ENCODE measurements at regions of chr1 and their contacts with region 1.

Region 1: DNA sequence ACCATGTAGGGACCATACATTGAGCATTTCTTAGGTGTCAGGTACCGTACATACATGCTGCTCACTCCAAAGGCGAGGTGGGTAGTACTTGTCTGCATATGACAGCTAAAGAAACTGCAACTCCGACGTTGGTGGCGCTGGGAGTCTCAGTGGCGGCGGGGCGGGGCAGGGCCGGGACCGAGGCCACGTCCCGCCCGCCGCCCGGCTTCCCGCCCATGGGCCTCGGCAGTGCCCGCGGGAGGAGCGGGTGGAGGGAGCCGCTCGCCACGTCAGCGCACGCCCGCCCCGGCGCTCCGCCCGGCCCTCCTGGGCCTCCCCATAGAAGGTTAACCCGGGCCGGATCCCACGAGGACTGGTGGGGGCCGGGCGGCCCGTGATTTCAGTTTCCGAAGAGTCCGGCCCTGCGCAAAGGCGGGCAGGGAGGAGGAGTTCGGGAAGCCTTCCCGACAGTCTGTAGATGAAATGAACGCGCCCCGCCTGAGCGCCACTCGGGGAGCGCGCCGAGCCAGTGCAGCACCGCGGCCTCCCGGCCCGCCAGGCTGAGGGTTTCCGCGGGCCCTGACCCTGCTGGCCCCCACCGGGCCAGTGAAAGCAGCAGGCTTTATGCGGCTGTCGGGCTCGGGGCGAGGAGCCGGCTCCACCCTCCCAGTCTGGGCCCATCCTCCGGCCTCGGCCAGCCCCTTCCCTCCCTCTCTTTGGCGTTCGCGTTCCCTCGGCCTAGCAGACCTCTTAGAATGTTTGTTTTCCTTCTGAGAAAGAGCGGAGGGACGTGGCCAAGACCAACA is 119.9 kb upstream of the JUN start:
- DNase-seq: peak; percentile 56 to 76 (median 60)
- H3K4me3 ChIP-seq: peak overlapping the region; percentile 53
- H3K4me3 Mint-ChIP-seq: peak overlapping the region; percentile 74 to 91 (median 83)
- H3K27ac ChIP-seq: peak overlapping the region; percentile 27
- H3K27ac Mint-ChIP-seq: peak overlapping the region; percentile 50 to 96 (median 89)
- H3K4me1 ChIP-seq: peaks cover 11% of the 10 kb centered on the region
- H3K4me1 Mint-ChIP-seq: peaks cover 16 to 23% (median 19%) of the 10 kb centered on the region in 3 donors
- H3K27me3 ChIP-seq: no peaks in the 10 kb centered on the region
- H3K27me3 Mint-ChIP-seq: no peaks in the 10 kb centered on the region

Region 2: GRCh38 chr1:58941471-58942289 is 38.0 kb after region 1 on chr1:
- CTCF ChIA-PET with region 1: no interaction called
- POLR2A ChIA-PET with region 1: interaction called, 10 read pairs
- DNase-seq: peak in 4 of 5 donors; percentile 22 to 75 (median 60)
- H3K4me3 ChIP-seq: peak overlapping the region; percentile 43
- H3K4me3 Mint-ChIP-seq: peak overlapping the region; percentile 39 to 91 (median 76)
- H3K27ac ChIP-seq: no peak overlapping the region
- H3K27ac Mint-ChIP-seq: peak overlapping the region; percentile 66 to 92 (median 82)
- H3K4me1 ChIP-seq: peaks cover 61% of the 10 kb centered on the region
- H3K4me1 Mint-ChIP-seq: peaks cover 71 to 83% (median 79%) of the 10 kb centered on the region in 3 donors
- H3K27me3 ChIP-seq: no peaks in the 10 kb centered on the region
- H3K27me3 Mint-ChIP-seq: no peaks in the 10 kb centered on the region

Region 3: DNA sequence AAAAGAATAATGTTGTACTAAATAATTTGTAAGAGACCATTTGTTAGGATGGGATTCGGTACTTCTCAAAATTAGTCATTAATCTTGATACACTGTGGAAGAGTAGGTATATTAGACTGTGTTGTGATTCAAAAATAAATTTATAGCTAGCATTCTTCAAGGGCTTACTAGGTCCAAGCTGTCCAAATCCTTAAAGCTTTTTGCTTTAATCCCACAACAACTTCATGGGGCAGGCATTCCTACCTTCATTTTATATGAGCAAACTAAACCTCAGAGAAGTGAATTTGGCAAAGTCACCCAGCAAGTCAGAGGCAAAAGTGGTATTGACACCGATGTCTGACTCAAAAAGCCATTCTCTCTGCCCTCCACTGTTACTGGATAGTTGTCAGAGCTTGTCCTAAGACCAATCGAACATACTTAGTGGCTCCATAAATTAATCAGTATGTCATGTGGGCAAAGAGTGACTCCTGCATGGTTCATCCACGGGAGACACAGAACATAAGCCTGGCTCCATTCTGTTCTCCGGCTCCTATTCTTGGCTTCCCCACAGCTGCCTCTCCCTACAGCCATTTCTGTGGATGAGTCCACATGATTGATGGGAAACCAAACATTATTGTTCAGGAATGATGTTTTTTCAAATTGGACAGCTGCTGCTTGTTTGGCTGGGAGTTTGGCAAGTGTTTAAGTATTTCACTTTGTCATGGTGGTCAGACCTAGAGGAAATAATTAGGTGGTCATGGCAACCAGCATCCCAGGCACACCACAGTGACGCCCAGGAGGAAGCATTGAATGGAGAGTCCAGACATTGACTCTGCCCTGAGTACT is 259.8 kb after region 1 on chr1:
- CTCF ChIA-PET with region 1: no interaction called
- POLR2A ChIA-PET with region 1: no interaction called
- DNase-seq: no peak
- H3K4me3 ChIP-seq: no peak overlapping the region
- H3K4me3 Mint-ChIP-seq: no peak overlapping the region
- H3K27ac ChIP-seq: no peak overlapping the region
- H3K27ac Mint-ChIP-seq: no peak overlapping the region
- H3K4me1 ChIP-seq: no peaks in the 10 kb centered on the region
- H3K4me1 Mint-ChIP-seq: no peaks in the 10 kb centered on the region
- H3K27me3 ChIP-seq: no peaks in the 10 kb centered on the region
- H3K27me3 Mint-ChIP-seq: peaks cover 18 to 20% of the 10 kb centered on the region in 2 donors

Measured in CD8-positive, alpha-beta memory T cell (primary cell).